Esophagus squamous epithelium (tissue), 5 donors: ENCODE measurements at regions of chr15 and their contacts with region 1.

Region 1: DNA sequence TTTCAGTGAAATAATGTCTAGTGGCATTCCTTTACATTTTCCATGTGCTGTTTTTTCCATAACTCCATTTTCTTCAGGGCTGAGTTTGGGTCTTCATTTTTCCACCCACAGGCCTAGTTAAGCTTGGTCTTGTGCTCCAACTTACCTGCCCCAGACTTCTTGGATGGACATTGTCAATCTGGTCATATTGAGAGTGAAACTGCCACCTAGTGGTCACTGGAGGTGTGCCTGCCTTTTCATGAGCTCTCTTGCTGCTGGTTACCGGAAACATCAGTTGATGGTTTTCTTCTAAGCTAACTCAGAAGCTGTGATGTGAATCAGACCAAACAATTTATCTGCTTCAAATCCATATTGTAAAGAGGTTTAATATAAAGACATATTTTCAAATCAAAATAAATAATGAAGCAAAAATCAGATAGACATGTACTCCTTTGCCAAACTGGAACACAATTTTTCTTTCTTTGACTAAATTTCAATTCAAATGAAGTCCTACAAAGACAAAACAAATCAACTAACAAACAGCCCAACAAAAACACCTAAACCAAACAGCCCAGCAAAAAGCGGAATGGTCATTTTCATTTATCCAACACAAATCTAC is 135.1 kb upstream of the RASGRP1 start:
- DNase-seq: no peak
- H3K4me3 ChIP-seq: no peak overlapping the region
- H3K27ac ChIP-seq: no peak overlapping the region
- H3K4me1 ChIP-seq: peaks cover 0 to 14% (median 0%) of the 10 kb centered on the region in 3 donors
- H3K27me3 ChIP-seq: no peaks in the 10 kb centered on the region
- CTCF ChIP-seq: peak; percentile 74 to 85 (median 80)
- POLR2A ChIP-seq: no peak

Region 2: DNA sequence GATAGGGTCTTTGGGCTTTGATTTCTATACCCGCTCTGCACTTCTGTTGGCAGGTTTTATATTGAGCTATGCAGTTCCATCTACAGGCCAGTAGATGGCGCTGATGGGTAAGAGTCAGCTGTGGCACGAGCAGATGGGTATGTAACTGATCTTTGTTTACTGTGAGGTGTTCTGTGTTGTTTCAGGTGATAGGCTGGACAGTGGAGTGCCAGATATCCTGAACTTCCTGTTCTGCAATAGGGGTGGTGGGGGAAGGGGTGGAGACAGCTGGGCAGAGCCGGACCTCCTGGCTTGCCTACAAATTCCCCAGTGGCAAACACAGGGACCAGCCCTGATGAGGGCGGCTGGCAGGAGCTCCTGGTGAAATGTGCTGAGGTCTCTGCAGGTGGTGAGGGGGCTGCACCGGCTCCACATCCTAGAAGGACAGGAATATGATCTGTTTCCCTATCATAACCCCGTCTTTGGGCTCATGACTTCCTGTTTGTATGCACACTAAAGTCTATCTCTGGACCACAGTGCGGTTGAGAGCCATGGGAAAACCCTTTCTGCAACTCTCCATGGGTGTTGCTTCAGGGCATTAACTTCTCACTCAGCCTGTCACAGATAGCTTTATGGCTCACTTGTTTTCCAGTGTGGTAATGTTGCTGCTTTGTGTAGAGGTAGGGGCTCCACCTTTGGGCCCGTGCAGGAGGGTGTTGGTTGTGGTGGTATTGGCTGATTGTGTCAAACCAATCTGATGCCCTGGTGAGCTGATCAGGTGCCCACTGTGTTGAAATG is 259.2 kb before region 1 on chr15:
- intact Hi-C with region 1: loop called (anchors 10 kb)
- DNase-seq: no peak
- H3K4me3 ChIP-seq: no peak overlapping the region
- H3K27ac ChIP-seq: no peak overlapping the region
- H3K4me1 ChIP-seq: peaks cover 0 to 7% (median 4%) of the 10 kb centered on the region in 3 donors
- H3K27me3 ChIP-seq: peaks cover 0 to 20% (median 0%) of the 10 kb centered on the region in 4 donors
- CTCF ChIP-seq: peak; percentile 80 to 94 (median 86)
- POLR2A ChIP-seq: no peak